ENCODE measurements at regions of chr2 and their contacts with region 1.

Region 1: GRCh38 chr2:152635635-152636298 is 81.5 kb downstream of the PRPF40A start:
- DNase-seq: peak; percentile 34
- ATAC-seq: peak; percentile 83
- H3K4me3 ChIP-seq: no peak overlapping the region
- H3K27ac ChIP-seq: no peak overlapping the region
- H3K4me1 ChIP-seq: no peaks in the 10 kb centered on the region
- H3K27me3 ChIP-seq: no peaks in the 10 kb centered on the region
- CTCF ChIP-seq: peak; percentile 71 to 88 (median 76)
- POLR2A ChIP-seq: no peak
- RAD21 ChIP-seq: peak; percentile 86

Region 2: DNA sequence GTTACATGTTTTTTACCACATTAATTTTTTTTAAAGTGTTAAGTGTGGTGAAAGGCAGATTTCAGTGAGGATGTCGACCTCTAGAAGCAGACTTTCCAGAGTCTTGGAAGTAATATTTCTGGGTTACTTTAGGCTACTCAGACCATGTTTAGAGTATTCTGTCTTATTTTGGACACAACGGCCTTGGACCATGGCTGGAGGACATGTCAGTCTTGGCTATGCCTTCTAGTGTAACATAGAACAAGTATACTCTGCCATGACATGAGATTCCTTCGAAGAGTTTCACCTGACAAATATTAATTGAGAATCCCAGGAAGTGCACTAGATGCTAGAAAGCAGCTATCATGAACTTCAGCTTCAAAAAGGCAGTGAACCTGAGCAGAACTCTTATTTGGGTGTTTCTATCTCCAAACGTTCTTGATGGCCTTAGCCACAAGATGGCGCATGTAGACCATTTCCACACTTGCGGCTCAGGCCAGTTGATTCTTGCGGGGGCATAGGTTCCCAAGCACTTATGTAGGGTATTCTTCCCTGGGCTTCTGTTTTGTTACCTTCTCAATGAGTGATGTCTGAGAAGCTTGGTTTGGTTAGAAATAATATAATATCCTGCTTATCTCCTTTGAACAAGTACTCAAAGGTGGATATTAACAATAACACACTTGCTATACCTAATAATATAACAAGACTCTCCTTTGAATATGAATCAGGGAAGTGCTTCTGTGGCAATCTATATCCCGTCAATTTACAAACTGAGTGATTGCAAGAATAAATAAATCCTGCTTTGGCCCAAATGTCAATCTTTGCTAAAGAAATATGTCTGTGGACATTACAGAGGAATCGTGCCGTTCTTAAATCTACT is 598.9 kb before region 1 on chr2:
- CTCF ChIA-PET with region 1: interaction called, 6 read pairs
- POLR2A ChIA-PET with region 1: no interaction called
- RAD21 ChIA-PET with region 1: no interaction called
- intact Hi-C with region 1: loop called (anchors 1 kb)
- DNase-seq: peak; percentile 61
- ATAC-seq: peak; percentile 94
- H3K4me3 ChIP-seq: no peak overlapping the region
- H3K27ac ChIP-seq: no peak overlapping the region
- H3K4me1 ChIP-seq: no peaks in the 10 kb centered on the region
- H3K27me3 ChIP-seq: no peaks in the 10 kb centered on the region
- CTCF ChIP-seq: peak; percentile 79 to 90 (median 79)
- POLR2A ChIP-seq: no peak
- RAD21 ChIP-seq: peak; percentile 93

Region 3: GRCh38 chr2:152175458-152176325 is 460.1 kb before region 1 on chr2 and contains the start of gene STAM2:
- CTCF ChIA-PET with region 1: interaction called, 13 read pairs
- POLR2A ChIA-PET with region 1: no interaction called
- RAD21 ChIA-PET with region 1: interaction called, 3 to 5 read pairs
- intact Hi-C with region 1: loop called (anchors 1 kb)
- DNase-seq: peak; percentile 79
- ATAC-seq: peak; percentile 87
- H3K4me3 ChIP-seq: peak within 1 kb of the TSS; percentile 91 to 93
- H3K27ac ChIP-seq: peak within 1 kb of the TSS; percentile 72
- H3K4me1 ChIP-seq: peaks cover 0 to 16% of the 10 kb centered on the region in 2 experiments; a peak in 3 of 4 replicates
- H3K27me3 ChIP-seq: no peaks in the 10 kb centered on the region
- CTCF ChIP-seq: peak; percentile 82 to 95 (median 93)
- POLR2A ChIP-seq: peak; percentile 38
- RAD21 ChIP-seq: peak; percentile 96
- total RNA-seq, gene STAM2: 19.2 TPM

Region 4: GRCh38 chr2:152189622-152190495 is 445.9 kb before region 1 on chr2:
- CTCF ChIA-PET with region 1: interaction called, 6 read pairs
- POLR2A ChIA-PET with region 1: no interaction called
- RAD21 ChIA-PET with region 1: interaction called in 1 of 2 experiments, 3 read pairs
- intact Hi-C with region 1: loop called (anchors 1 kb)
- DNase-seq: peak; percentile 48
- ATAC-seq: peak; percentile 95
- H3K4me3 ChIP-seq: no peak overlapping the region
- H3K27ac ChIP-seq: no peak overlapping the region
- H3K4me1 ChIP-seq: no peaks in the 10 kb centered on the region
- H3K27me3 ChIP-seq: no peaks in the 10 kb centered on the region
- CTCF ChIP-seq: peak; percentile 69 to 92 (median 78)
- POLR2A ChIP-seq: no peak
- RAD21 ChIP-seq: peak; percentile 96

Measured in HCT116 (cell line).